ENCODE measurements at regions of chr5 and their contacts with region 1.

Region 1: DNA sequence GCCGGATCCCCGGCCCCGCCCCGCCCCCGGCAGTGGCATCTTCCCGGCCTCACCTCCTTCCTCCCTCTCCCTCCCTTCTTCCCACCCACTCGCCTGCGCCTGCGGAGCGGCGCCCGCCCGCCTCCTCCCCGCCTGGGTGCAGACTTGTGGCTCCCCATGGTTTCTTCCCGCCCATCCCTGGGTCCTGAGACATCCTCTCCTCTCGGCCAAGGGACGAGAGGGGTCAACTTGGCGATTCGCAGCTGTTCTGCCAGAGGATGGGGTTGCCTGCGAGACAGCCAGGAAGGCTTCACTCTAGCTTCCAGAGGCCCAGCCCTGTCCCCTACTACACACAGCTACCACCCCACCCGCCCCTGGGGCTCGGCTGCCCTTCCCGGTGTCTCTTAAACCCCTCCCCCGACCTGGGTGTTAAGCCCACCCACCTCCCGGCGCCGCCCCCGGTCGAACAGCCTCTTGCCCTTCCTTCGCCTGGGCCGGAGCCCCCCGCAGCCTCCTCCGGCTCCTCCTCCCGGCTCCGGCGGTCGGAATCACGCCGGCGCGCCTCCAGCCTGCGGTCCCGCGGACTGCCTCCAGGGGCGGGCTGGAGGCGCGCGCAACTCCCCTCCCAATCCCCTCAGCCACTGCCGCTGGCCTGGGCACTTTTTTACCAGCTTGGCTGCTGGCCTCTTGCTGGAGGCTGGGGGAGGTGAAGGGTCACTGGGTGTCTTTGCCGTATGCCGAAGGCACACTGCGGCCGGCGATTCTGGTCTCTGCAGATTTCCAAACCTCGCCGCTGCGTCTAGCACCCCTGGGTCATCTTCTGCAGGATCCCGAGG is 1.9 kb downstream of the JADE2 start:
- DNase-seq: peak; percentile 69
- ATAC-seq: peak; percentile 57
- H3K4me3 ChIP-seq: peak overlapping the region; percentile 76
- H3K27ac ChIP-seq: peak overlapping the region; percentile 69
- H3K4me1 ChIP-seq: peaks cover 18% of the 10 kb centered on the region
- H3K27me3 ChIP-seq: no peaks in the 10 kb centered on the region
- CTCF ChIP-seq: peak; percentile 59

Region 2: GRCh38 chr5:134304311-134304710 is 223.0 kb before region 1 on chr5:
- CTCF ChIA-PET with region 1: no interaction called
- POLR2A ChIA-PET with region 1: no interaction called
- intact Hi-C with region 1: loop called (anchors 2 kb)
- DNase-seq: no peak
- ATAC-seq: no peak
- H3K4me3 ChIP-seq: no peak overlapping the region
- H3K27ac ChIP-seq: no peak overlapping the region
- H3K4me1 ChIP-seq: no peaks in the 10 kb centered on the region
- H3K27me3 ChIP-seq: no peaks in the 10 kb centered on the region
- CTCF ChIP-seq: no peak

Region 3: GRCh38 chr5:134370871-134371833 is 156.2 kb before region 1 on chr5 and contains the start of gene UBE2B:
- CTCF ChIA-PET with region 1: interaction called, 6 read pairs
- POLR2A ChIA-PET with region 1: no interaction called
- intact Hi-C with region 1: loop called (anchors 2 kb)
- DNase-seq: peak; percentile 94
- ATAC-seq: peak; percentile 64
- H3K4me3 ChIP-seq: peak within 1 kb of the TSS; percentile 99
- H3K27ac ChIP-seq: peak within 1 kb of the TSS; percentile 89
- H3K4me1 ChIP-seq: peaks cover 17% of the 10 kb centered on the region
- H3K27me3 ChIP-seq: no peaks in the 10 kb centered on the region
- CTCF ChIP-seq: no peak
- total RNA-seq, gene UBE2B: 9.5 and 10.0 TPM in 2 replicates

Region 4: GRCh38 chr5:134411546-134412266 is 115.6 kb before region 1 on chr5 and contains the start of gene CDKN2AIPNL:
- CTCF ChIA-PET with region 1: no interaction called
- POLR2A ChIA-PET with region 1: no interaction called
- intact Hi-C with region 1: loop called (anchors 2 kb)
- DNase-seq: peak; percentile 80
- ATAC-seq: peak; percentile 99
- H3K4me3 ChIP-seq: peak within 1 kb of the TSS; percentile 96
- H3K27ac ChIP-seq: peak within 1 kb of the TSS; percentile 16; the same call in 1 of the 2 replicates
- H3K4me1 ChIP-seq: peaks cover 24% of the 10 kb centered on the region; the same call in 1 of the 2 replicates
- H3K27me3 ChIP-seq: no peaks in the 10 kb centered on the region
- CTCF ChIP-seq: peak; percentile 68
- total RNA-seq, gene CDKN2AIPNL: 29.7 and 38.2 TPM in 2 replicates

Region 5: DNA sequence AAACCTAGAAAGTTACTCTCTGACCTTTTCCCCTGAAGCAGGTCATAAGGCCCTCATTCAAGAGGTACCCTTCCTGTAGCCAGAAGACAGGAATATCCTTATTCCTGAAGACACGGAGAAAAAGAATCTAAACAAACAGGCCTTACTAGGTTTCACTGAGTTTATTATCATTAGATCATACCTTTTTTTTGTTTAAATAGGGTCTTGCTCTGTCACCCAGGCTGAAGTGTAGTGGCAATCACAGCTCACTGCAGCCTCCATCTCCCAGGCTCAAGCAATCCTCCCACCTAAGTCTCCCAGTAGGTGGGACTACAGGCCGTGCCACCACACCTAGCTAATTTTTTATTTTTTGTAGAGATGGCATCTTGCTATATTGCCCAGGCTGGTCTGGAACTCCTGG is 103.9 kb before region 1 on chr5:
- CTCF ChIA-PET with region 1: no interaction called
- POLR2A ChIA-PET with region 1: interaction called, 11 read pairs
- intact Hi-C with region 1: no loop called
- DNase-seq: no peak
- ATAC-seq: no peak
- H3K4me3 ChIP-seq: no peak overlapping the region
- H3K27ac ChIP-seq: no peak overlapping the region
- H3K4me1 ChIP-seq: no peaks in the 10 kb centered on the region
- H3K27me3 ChIP-seq: no peaks in the 10 kb centered on the region
- CTCF ChIP-seq: no peak

Region 6: DNA sequence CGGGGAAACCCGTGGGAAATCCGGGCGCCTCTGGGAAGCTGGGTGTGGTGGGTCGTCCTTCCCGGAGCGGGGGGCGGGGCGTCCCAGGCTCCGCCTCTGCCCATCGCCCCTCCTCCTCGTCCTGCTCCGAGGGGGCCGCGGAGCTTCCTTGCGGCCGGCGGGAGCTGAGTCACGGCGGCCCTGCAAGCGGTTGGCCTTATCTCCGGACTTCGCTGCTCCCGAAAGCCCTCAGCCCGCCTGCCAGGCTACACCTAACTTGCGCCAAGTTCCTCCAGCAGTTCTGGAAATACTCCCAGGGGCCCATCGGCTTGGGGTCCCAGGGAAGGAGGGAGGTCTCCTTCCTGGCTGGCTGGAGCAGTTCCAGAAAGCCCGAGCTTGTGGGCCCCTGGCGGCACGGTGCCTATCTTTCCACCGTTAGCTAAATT is 61.5 kb before region 1 on chr5:
- CTCF ChIA-PET with region 1: interaction called, 11 read pairs
- POLR2A ChIA-PET with region 1: interaction called, 4 read pairs
- intact Hi-C with region 1: loop called (anchors 5 kb)
- DNase-seq: peak; percentile 86
- ATAC-seq: peak; percentile 76
- H3K4me3 ChIP-seq: peak overlapping the region; percentile 68
- H3K27ac ChIP-seq: peak overlapping the region; percentile 99
- H3K4me1 ChIP-seq: peaks cover 13% of the 10 kb centered on the region; the same call in 1 of the 2 replicates
- H3K27me3 ChIP-seq: no peaks in the 10 kb centered on the region
- CTCF ChIP-seq: no peak

Region 7: DNA sequence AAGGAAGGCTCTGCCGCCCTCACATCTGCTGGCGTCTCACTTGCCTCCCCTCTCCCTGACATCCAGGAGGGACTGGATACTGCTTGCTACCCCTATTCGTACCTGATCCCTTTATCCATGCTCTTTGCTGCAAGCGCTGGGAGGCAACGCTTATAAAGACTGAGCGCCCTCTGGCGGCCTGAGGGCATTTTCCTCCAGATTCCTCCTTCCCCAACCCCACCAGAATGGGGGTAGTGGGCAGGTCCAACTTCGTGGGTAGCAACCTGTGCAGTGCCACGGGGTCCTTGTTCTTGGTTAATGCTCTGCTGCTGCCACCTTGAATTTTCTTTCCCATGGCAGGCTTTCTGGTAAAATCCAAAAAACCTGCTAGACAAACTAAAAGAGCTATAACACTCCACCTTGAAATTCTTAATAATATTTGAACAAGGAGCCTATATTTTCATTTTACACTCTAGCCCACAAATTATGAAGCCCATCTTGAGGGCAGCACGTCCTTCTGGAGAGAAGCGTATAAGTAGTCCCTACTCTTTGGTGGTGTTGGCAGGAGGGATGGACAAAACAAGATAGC is 50.5 kb after region 1 on chr5:
- CTCF ChIA-PET with region 1: interaction called, 3 read pairs
- POLR2A ChIA-PET with region 1: interaction called, 4 read pairs
- intact Hi-C with region 1: loop called (anchors 2 kb)
- DNase-seq: peak; percentile 80
- ATAC-seq: peak; percentile 68
- H3K4me3 ChIP-seq: no peak overlapping the region
- H3K27ac ChIP-seq: no peak overlapping the region
- H3K4me1 ChIP-seq: no peaks in the 10 kb centered on the region; the same call in 1 of the 2 replicates
- H3K27me3 ChIP-seq: no peaks in the 10 kb centered on the region
- CTCF ChIP-seq: peak; percentile 84

Region 8: DNA sequence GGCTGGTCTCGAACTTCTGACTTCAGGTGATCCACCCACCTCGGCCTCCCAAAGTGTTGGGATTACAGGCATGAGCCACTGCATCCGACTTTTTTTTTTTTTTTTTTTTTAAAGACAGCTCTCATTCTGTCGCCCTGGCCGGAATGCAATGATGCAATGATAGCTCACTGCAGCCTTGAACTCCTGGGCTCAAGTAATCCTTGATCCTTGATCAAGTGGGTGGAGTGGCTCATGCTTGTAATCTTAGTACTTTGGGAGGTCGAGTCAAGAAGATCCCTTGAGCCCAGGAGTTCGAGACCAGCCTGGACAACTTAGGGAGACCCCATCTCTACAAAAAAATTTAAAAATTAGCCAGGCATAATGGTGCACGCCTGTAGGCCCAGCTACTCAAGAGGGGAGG is 129.3 kb after region 1 on chr5:
- CTCF ChIA-PET with region 1: no interaction called
- POLR2A ChIA-PET with region 1: no interaction called
- intact Hi-C with region 1: no loop called
- DNase-seq: no peak
- ATAC-seq: no peak
- H3K4me3 ChIP-seq: no peak overlapping the region
- H3K27ac ChIP-seq: no peak overlapping the region
- H3K4me1 ChIP-seq: no peaks in the 10 kb centered on the region
- H3K27me3 ChIP-seq: no peaks in the 10 kb centered on the region
- CTCF ChIP-seq: no peak

Region 9: GRCh38 chr5:135208903-135209721 is 681.8 kb after region 1 on chr5:
- CTCF ChIA-PET with region 1: no interaction called
- POLR2A ChIA-PET with region 1: no interaction called
- intact Hi-C with region 1: no loop called
- DNase-seq: peak; percentile 87
- ATAC-seq: peak; percentile 98
- H3K4me3 ChIP-seq: no peak overlapping the region
- H3K27ac ChIP-seq: peak overlapping the region; percentile 39; the same call in 1 of the 2 replicates
- H3K4me1 ChIP-seq: peaks cover 21% of the 10 kb centered on the region
- H3K27me3 ChIP-seq: no peaks in the 10 kb centered on the region
- CTCF ChIP-seq: peak; percentile 55; the same call in 1 of the 2 replicates